ENCODE measurements at regions of chr19 and their contacts with region 1.

Region 1: DNA sequence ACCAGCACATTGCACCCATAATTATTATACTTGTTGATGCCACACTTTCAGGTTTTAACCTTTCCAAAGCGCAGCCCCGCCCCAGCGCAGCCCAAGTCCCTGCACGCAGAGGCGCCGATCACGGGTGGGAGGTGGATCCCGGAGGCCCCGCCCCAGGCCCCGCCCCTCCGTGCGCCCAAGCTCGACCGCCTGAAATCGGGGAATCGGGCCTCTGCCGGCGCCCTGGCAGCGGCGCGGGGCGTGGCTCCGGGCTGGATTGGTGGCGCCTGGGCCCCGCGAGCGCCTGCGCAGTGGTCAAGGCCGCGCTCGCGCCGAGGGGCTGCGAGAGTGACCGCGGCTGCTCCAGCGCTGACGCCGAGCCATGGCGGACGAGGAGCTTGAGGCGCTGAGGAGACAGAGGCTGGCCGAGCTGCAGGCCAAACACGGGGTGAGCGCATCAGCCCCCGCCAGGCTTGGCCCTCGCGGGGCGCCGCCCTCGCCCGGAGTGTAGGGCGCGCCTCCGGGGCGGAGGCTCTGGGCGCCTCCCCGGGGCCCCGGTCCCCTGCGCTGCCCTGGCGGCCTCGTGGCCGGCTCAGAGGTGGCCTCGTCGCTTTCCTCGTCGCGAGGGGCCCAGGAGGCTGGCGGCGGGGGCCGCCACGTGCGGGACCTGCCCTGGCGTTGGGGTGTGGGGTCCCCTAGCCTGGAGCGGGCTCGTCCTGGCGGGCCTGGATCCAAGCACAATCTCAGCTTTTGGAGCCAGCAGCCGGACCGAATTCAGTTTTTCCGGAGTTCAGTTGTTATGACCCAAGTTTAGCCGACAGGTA is at the start of gene PDCD5:
- DNase-seq: peak; percentile 94 to 99 (median 97)
- ATAC-seq: peak; percentile 90
- H3K4me3 ChIP-seq: peak within 1 kb of the TSS; percentile 80
- H3K4me3 Mint-ChIP-seq: peak within 1 kb of the TSS; percentile 91
- H3K27ac ChIP-seq: peak within 1 kb of the TSS; percentile 40 to 57
- H3K27ac Mint-ChIP-seq: peak within 1 kb of the TSS; percentile 88
- H3K4me1 ChIP-seq: peaks cover 26% of the 10 kb centered on the region
- H3K4me1 Mint-ChIP-seq: peaks cover 41% of the 10 kb centered on the region
- H3K27me3 ChIP-seq: peaks cover 0 to 5% of the 10 kb centered on the region in 2 experiments
- H3K27me3 Mint-ChIP-seq: no peaks in the 10 kb centered on the region
- CTCF ChIP-seq: no peak
- total RNA-seq, gene PDCD5: 30.0 to 32.7 TPM

Region 2: GRCh38 chr19:32181216-32181920 is 399.7 kb before region 1 on chr19:
- CTCF ChIA-PET with region 1: no interaction called
- POLR2A ChIA-PET with region 1: no interaction called
- intact Hi-C with region 1: no loop called
- DNase-seq: no peak
- ATAC-seq: no peak
- H3K4me3 ChIP-seq: no peak overlapping the region
- H3K4me3 Mint-ChIP-seq: no peak overlapping the region
- H3K27ac ChIP-seq: no peak overlapping the region
- H3K27ac Mint-ChIP-seq: no peak overlapping the region
- H3K4me1 ChIP-seq: no peaks in the 10 kb centered on the region
- H3K4me1 Mint-ChIP-seq: no peaks in the 10 kb centered on the region
- H3K27me3 ChIP-seq: no peaks in the 10 kb centered on the region
- H3K27me3 Mint-ChIP-seq: peaks cover 4% of the 10 kb centered on the region
- CTCF ChIP-seq: no peak

Region 3: GRCh38 chr19:32345261-32346207 is 235.6 kb before region 1 on chr19 and contains the start of gene ZNF507:
- CTCF ChIA-PET with region 1: no interaction called
- POLR2A ChIA-PET with region 1: interaction called, 10 read pairs
- intact Hi-C with region 1: loop called in 1 of 2 experiments (anchors 2 kb)
- DNase-seq: peak; percentile 64 to 88 (median 75)
- ATAC-seq: peak; percentile 84
- H3K4me3 ChIP-seq: peak within 1 kb of the TSS; percentile 92
- H3K4me3 Mint-ChIP-seq: peak within 1 kb of the TSS; percentile 96
- H3K27ac ChIP-seq: peak within 1 kb of the TSS; percentile 58 to 82
- H3K27ac Mint-ChIP-seq: peak within 1 kb of the TSS; percentile 87
- H3K4me1 ChIP-seq: peaks cover 13% of the 10 kb centered on the region
- H3K4me1 Mint-ChIP-seq: peaks cover 50% of the 10 kb centered on the region
- H3K27me3 ChIP-seq: no peaks in the 10 kb centered on the region
- H3K27me3 Mint-ChIP-seq: peaks cover 5% of the 10 kb centered on the region
- CTCF ChIP-seq: no peak
- total RNA-seq, gene ZNF507: 30.4 to 31.3 TPM

Region 4: DNA sequence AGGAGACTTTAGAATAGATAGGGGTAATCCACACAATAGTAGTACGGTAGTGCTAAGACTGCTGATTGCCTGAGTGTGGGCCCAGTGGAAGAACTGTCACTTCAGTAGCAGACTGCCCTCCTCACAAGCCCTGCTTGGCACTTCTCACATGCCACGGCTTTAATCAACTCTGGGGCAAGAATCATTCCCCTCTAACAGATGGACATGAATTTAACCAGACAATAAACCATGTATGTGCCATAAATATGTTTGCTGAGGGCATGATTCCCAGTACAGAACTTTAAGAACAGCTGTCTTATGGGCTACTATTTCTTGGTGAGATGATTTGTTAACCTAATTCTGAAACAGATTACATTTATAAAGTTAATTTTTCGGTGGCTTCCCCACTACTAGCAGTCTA is 153.6 kb before region 1 on chr19:
- CTCF ChIA-PET with region 1: no interaction called
- POLR2A ChIA-PET with region 1: no interaction called
- intact Hi-C with region 1: no loop called
- DNase-seq: no peak
- ATAC-seq: no peak
- H3K4me3 ChIP-seq: no peak overlapping the region
- H3K4me3 Mint-ChIP-seq: no peak overlapping the region
- H3K27ac ChIP-seq: no peak overlapping the region
- H3K27ac Mint-ChIP-seq: no peak overlapping the region
- H3K4me1 ChIP-seq: no peaks in the 10 kb centered on the region
- H3K4me1 Mint-ChIP-seq: peaks cover 4% of the 10 kb centered on the region
- H3K27me3 ChIP-seq: no peaks in the 10 kb centered on the region
- H3K27me3 Mint-ChIP-seq: no peaks in the 10 kb centered on the region
- CTCF ChIP-seq: no peak

Region 5: DNA sequence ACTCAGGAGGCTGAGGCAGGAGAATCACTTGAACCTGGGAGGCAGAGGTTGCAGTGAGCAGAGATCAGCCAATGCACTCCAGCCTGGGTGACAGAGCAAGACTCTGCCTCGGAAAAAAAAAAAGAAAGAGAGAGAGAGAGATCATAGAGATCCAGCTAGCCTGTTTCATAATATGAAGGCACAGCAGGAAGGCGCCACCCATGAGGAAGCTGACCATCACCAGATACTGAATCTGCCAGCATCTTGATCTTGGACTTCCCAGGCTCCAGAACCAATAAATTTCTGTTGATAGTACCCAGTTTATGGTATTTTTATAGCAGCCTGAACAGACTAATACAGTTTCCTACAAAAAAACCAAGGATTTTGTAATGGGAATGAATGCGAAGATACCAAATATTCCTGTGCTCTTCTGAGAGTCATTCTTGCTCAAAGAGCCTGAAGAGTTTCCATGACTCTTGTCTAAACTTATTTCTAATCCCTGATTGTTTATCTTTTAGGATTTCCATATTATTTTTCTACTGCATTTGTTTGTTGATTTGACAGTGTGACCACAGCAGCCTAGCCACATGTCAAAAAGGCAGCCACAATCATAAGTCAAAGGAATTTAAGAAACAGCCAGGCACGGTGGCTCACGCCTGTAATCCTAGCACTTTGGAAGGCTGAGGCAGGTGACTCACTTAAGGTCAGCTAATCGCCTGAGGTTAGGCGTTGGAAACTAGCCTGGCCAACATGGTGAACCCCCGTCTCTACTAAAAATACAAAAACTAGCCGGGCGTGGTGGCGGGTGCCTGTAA is 37.8 kb before region 1 on chr19:
- CTCF ChIA-PET with region 1: no interaction called
- POLR2A ChIA-PET with region 1: no interaction called
- intact Hi-C with region 1: no loop called
- DNase-seq: no peak
- ATAC-seq: no peak
- H3K4me3 ChIP-seq: no peak overlapping the region
- H3K4me3 Mint-ChIP-seq: no peak overlapping the region
- H3K27ac ChIP-seq: no peak overlapping the region
- H3K27ac Mint-ChIP-seq: no peak overlapping the region
- H3K4me1 ChIP-seq: no peaks in the 10 kb centered on the region
- H3K4me1 Mint-ChIP-seq: no peaks in the 10 kb centered on the region
- H3K27me3 ChIP-seq: peaks cover 0 to 2% of the 10 kb centered on the region in 2 experiments
- H3K27me3 Mint-ChIP-seq: peaks cover 7% of the 10 kb centered on the region
- CTCF ChIP-seq: no peak

Region 6: DNA sequence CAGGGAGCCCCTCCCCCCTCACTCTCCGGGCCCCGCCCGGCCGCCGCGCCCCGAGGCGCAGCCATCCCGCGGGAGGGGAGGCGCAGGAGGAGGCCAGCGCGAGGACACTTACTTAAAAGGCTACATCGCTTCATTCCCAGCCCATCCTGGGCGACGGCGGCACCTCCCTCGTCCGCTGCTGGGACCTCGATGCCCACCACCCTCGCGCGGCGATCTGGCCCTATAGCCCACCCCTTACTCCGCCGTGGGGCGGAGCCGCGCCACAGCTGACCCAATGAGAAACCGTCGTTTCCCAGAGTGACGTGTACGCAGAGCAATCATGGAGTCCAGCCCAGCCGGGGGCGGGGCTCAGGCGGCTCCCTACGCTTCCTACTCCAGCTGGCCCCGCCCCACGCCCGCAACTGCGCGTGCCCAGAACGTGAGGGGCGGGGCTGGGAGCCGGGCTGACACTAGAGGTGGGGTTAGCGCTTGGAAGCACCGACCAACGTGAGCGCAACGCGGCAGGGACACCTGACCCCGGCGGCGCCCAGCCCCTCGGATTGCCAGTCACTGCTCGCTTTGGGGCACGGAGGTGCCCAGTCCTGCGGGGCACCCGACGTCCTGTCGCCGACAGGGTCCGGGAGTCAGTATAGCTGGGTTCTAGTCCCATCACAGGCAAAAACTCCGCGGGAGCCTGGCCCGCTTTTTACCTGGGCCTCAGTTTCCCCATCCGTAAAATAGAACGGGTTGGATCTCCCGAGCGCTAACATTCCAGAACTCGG is 94.0 kb after region 1 on chr19 and contains the start of gene ANKRD27:
- CTCF ChIA-PET with region 1: interaction called, 3 read pairs
- POLR2A ChIA-PET with region 1: interaction called, 9 read pairs
- intact Hi-C with region 1: loop called in 1 of 2 experiments (anchors 5 kb)
- DNase-seq: peak; percentile 94 to 99 (median 98)
- ATAC-seq: peak; percentile 94
- H3K4me3 ChIP-seq: peak within 1 kb of the TSS; percentile 89
- H3K4me3 Mint-ChIP-seq: peak within 1 kb of the TSS; percentile 95
- H3K27ac ChIP-seq: peak within 1 kb of the TSS in 1 of 2 donors; percentile 80
- H3K27ac Mint-ChIP-seq: peak within 1 kb of the TSS; percentile 79
- H3K4me1 ChIP-seq: peaks cover 53% of the 10 kb centered on the region
- H3K4me1 Mint-ChIP-seq: peaks cover 50% of the 10 kb centered on the region
- H3K27me3 ChIP-seq: peaks cover 14 to 21% of the 10 kb centered on the region in 2 experiments
- H3K27me3 Mint-ChIP-seq: peaks cover 8% of the 10 kb centered on the region
- CTCF ChIP-seq: no peak
- total RNA-seq, gene ANKRD27: 16.5 to 17.6 TPM

Region 7: GRCh38 chr19:32748497-32748896 is 167.4 kb after region 1 on chr19:
- CTCF ChIA-PET with region 1: no interaction called
- POLR2A ChIA-PET with region 1: no interaction called
- intact Hi-C with region 1: loop called in 1 of 2 experiments (anchors 2 kb)
- DNase-seq: peak in 9 of 14 experiments; percentile 8 to 55 (median 17)
- ATAC-seq: peak; percentile 18
- H3K4me3 ChIP-seq: no peak overlapping the region
- H3K4me3 Mint-ChIP-seq: no peak overlapping the region
- H3K27ac ChIP-seq: no peak overlapping the region
- H3K27ac Mint-ChIP-seq: peak overlapping the region; percentile 16
- H3K4me1 ChIP-seq: peaks cover 28% of the 10 kb centered on the region
- H3K4me1 Mint-ChIP-seq: peaks cover 16% of the 10 kb centered on the region
- H3K27me3 ChIP-seq: peaks cover 3 to 5% of the 10 kb centered on the region in 2 experiments
- H3K27me3 Mint-ChIP-seq: peaks cover 20% of the 10 kb centered on the region
- CTCF ChIP-seq: peak; percentile 16

Region 8: DNA sequence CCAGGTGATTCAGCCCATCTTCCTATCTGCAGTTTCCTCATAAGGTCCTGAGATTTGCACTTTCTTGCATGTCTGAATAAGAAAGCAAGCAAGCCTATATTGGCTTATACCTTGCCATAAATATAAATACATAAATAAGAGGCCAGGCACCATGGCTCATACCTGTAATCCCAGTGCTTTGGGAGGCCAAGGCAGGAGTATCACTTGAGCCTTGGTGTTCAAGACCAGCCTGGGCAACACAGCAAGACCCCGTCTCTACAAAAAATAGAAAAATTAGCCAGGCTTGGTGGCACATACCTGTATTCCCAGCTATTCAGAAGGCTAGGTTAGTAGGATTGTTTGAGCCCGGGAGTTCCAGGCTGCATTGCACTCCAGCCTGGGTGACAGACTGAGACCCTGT is 494.4 kb after region 1 on chr19:
- CTCF ChIA-PET with region 1: no interaction called
- POLR2A ChIA-PET with region 1: no interaction called
- intact Hi-C with region 1: loop called in 1 of 2 experiments (anchors 5 kb)
- DNase-seq: no peak
- ATAC-seq: no peak
- H3K4me3 ChIP-seq: no peak overlapping the region
- H3K4me3 Mint-ChIP-seq: no peak overlapping the region
- H3K27ac ChIP-seq: no peak overlapping the region
- H3K27ac Mint-ChIP-seq: no peak overlapping the region
- H3K4me1 ChIP-seq: peaks cover 4% of the 10 kb centered on the region
- H3K4me1 Mint-ChIP-seq: no peaks in the 10 kb centered on the region
- H3K27me3 ChIP-seq: no peaks in the 10 kb centered on the region
- H3K27me3 Mint-ChIP-seq: no peaks in the 10 kb centered on the region
- CTCF ChIP-seq: no peak

Region 9: GRCh38 chr19:33176670-33177416 is 595.7 kb after region 1 on chr19:
- CTCF ChIA-PET with region 1: no interaction called
- POLR2A ChIA-PET with region 1: interaction called, 7 read pairs
- intact Hi-C with region 1: loop called in 1 of 2 experiments (anchors 5 kb)
- DNase-seq: peak; percentile 86 to 100 (median 96)
- ATAC-seq: peak; percentile 69
- H3K4me3 ChIP-seq: peak overlapping the region; percentile 91
- H3K4me3 Mint-ChIP-seq: peak overlapping the region; percentile 100
- H3K27ac ChIP-seq: peak overlapping the region; percentile 82 to 97
- H3K27ac Mint-ChIP-seq: peak overlapping the region; percentile 100
- H3K4me1 ChIP-seq: peaks cover 39% of the 10 kb centered on the region
- H3K4me1 Mint-ChIP-seq: peaks cover 52% of the 10 kb centered on the region
- H3K27me3 ChIP-seq: no peaks in the 10 kb centered on the region
- H3K27me3 Mint-ChIP-seq: peaks cover 10% of the 10 kb centered on the region
- CTCF ChIP-seq: no peak

Region 10: DNA sequence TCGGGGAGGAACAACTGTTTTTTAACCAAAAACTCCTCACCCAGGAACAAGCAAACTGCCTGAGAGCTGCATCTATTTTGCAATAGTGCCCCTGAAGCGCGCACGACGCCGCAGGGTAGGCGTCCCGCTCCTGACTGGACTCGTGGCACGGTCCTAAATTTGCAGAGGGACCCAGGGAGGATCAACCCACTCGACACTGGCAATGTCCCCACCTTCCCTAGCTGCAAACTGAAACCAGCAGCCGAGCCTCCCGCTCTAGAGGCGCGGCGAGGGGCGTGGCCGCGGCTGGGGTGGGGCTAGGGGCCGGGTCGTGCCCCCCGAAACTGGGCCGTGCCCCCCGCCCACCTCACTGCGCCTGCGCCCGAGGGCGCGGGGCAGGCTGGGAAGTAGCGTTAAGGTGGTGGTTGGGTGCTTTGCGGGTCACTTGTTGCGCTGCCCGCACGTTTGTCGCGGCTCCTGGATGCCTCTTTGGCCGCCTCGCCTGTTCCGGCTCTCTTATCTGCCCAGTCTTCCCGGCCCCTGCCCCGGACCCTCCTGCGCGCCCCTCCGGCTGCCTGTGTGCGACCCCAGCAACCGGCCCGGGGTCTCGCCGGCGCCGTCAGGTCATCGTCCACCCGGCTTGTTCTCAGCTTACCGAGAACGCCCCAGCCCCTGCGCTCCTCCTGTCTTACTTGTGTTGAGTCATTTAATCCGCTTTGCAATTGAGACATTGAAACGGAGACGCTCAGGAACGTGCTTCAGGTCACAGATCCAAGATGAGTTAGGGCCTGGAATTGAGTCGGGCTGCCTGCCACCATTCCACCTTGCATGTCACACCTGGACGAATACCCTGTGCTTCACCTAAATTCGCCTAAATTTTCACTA is 1553.3 kb after region 1 on chr19:
- CTCF ChIA-PET with region 1: no interaction called
- POLR2A ChIA-PET with region 1: no interaction called
- intact Hi-C with region 1: loop called in 1 of 2 experiments (anchors 10 kb)
- DNase-seq: peak; percentile 68 to 97 (median 91)
- ATAC-seq: peak; percentile 92
- H3K4me3 ChIP-seq: peak overlapping the region; percentile 67
- H3K4me3 Mint-ChIP-seq: peak overlapping the region; percentile 97
- H3K27ac ChIP-seq: peak overlapping the region; percentile 49 to 75
- H3K27ac Mint-ChIP-seq: peak overlapping the region; percentile 85
- H3K4me1 ChIP-seq: peaks cover 13% of the 10 kb centered on the region
- H3K4me1 Mint-ChIP-seq: peaks cover 3% of the 10 kb centered on the region
- H3K27me3 ChIP-seq: no peaks in the 10 kb centered on the region
- H3K27me3 Mint-ChIP-seq: no peaks in the 10 kb centered on the region
- CTCF ChIP-seq: no peak

Measured in CD4-positive, alpha-beta T cell (primary cell).